Dorsolateral prefrontal cortex (tissue), 120 donors: ENCODE measurements at regions of chr12 and their contacts with region 1.

Region 1: GRCh38 chr12:53675651-53676453 is at the start of gene ATP5MC2:
- DNase-seq: peak; percentile 95 to 98 (median 96)
- H3K4me3 ChIP-seq: peak within 1 kb of the TSS; percentile 61 to 97 (median 85)
- H3K27ac ChIP-seq: peak within 1 kb of the TSS; percentile 89 to 100 (median 99)
- H3K27me3 ChIP-seq: no peaks in the 10 kb centered on the region
- CTCF ChIP-seq: peak; percentile 98 to 100 (median 100)
- total RNA-seq, gene ATP5MC2: 147 to 261 (median 203) TPM

Region 2: DNA sequence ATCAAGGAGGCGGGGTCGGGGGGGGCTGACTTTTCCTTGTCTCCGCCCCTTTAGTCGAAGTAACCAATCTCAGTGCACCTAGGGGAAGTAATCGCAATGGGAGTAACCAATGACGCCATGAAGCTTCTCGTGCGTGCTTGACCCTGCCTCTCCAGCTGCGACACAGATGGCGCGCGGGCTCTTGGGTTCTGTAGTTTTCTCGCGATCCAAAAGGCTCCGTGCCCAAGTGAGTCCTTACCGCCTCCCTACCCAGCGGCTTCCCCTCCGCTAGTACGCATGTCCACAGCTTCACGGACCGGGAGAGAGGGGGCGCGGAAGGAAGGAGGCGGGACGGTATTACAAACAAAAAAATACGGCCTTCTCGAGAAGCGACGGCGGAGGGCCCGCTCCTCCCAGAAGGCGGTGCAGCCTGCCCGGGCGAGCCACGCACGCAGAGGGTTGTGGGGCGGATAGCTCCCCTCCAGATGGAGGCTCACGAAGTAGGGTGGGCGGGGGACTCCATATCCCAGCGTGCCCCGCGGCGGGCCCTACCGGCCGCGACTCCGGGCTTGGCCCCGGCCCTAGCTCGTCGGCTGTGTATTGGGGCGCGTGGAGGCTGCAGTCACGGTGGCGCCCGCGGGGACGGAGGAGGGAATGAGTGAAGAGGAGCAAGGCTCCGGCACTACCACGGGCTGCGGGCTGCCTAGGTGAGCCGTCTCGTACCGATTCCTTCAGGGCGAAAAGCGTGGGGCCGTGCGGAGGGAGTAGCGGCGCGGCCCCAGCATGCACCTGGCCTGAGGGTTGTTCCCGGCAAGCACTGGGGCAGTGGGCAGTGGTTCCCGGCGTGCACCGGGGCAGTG is 174.9 kb before region 1 on chr12 and contains the start of gene TARBP2:
- intact Hi-C with region 1: loop called in 1 of 2 experiments (anchors 1 kb)
- DNase-seq: peak; percentile 95 to 99 (median 99)
- H3K4me3 ChIP-seq: peak within 1 kb of the TSS; percentile 52 to 100 (median 80)
- H3K27ac ChIP-seq: peak within 1 kb of the TSS; percentile 94 to 100 (median 99)
- H3K27me3 ChIP-seq: no peaks in the 10 kb centered on the region
- CTCF ChIP-seq: peak in 40 of 56 donors; percentile 2 to 60 (median 28)
- total RNA-seq, gene TARBP2: 10.9 to 29.5 (median 20.9) TPM

Region 3: GRCh38 chr12:53543539-53543938 is 132.3 kb before region 1 on chr12:
- intact Hi-C with region 1: loop called (anchors 1 to 2 kb)
- DNase-seq: peak; percentile 41 to 83 (median 70)
- H3K4me3 ChIP-seq: peak overlapping the region in 4 of 59 donors; percentile 3 to 31 (median 8)
- H3K27ac ChIP-seq: peak overlapping the region; percentile 52 to 93 (median 87)
- H3K27me3 ChIP-seq: no peaks in the 10 kb centered on the region
- CTCF ChIP-seq: peak; percentile 66 to 98 (median 92)

Region 4: DNA sequence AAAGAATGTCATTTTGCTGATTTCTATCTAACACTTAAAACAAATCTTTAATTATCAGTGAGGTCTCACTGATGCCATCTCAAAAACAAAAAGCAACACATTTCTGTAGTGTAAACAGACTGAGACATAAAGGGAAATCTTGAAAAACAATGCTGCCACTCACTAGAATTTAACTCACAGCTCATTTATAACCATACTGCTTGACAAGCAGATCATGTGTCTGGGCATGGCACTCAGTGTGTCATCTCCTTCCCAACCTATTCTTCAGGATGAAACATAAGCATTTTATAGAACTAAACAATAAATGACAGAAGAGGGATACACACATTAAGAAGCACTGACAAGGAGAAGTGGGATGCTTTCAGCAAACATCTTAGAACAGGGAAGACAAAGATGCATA is 72.0 kb before region 1 on chr12:
- intact Hi-C with region 1: loop called (anchors 2 kb)
- DNase-seq: peak in 1 of 10 donors; percentile 22
- H3K4me3 ChIP-seq: peak overlapping the region in 7 of 59 donors; percentile 1 to 33 (median 15)
- H3K27ac ChIP-seq: peak overlapping the region in 58 of 59 donors; percentile 77 to 98 (median 93)
- H3K27me3 ChIP-seq: no peaks in the 10 kb centered on the region
- CTCF ChIP-seq: peak in 1 of 56 donors; percentile 11

Region 5: GRCh38 chr12:53625946-53626701 is 49.7 kb before region 1 on chr12 and contains the start of gene ATF7:
- intact Hi-C with region 1: loop called (anchors 1 to 2 kb)
- DNase-seq: peak; percentile 95 to 99 (median 98)
- H3K4me3 ChIP-seq: peak within 1 kb of the TSS; percentile 62 to 94 (median 77)
- H3K27ac ChIP-seq: peak within 1 kb of the TSS; percentile 90 to 100 (median 97)
- H3K27me3 ChIP-seq: no peaks in the 10 kb centered on the region
- CTCF ChIP-seq: peak in 38 of 56 donors; percentile 4 to 64 (median 36)
- total RNA-seq, gene ATF7: 24.9 to 81.0 (median 39.7) TPM

Region 6: GRCh38 chr12:53659011-53659551 is 16.8 kb before region 1 on chr12:
- intact Hi-C with region 1: loop called (anchors 1 to 2 kb)
- DNase-seq: peak in 9 of 10 donors; percentile 14 to 80 (median 67)
- H3K4me3 ChIP-seq: peak overlapping the region in 43 of 59 donors; percentile 0 to 52 (median 17)
- H3K27ac ChIP-seq: peak overlapping the region; percentile 87 to 100 (median 98)
- H3K27me3 ChIP-seq: no peaks in the 10 kb centered on the region
- CTCF ChIP-seq: peak in 23 of 56 donors; percentile 9 to 47 (median 21)